ENCODE measurements at regions of chr17 and their contacts with region 1.

Region 1: GRCh38 chr17:64320613-64321553 is 57.8 kb upstream of the TEX2 start:
- DNase-seq: peak; percentile 68
- ATAC-seq: peak; percentile 47
- H3K4me3 Mint-ChIP-seq: no peak overlapping the region
- H3K27ac Mint-ChIP-seq: peak overlapping the region; percentile 43
- H3K4me1 Mint-ChIP-seq: peaks cover 40% of the 10 kb centered on the region
- H3K27me3 Mint-ChIP-seq: no peaks in the 10 kb centered on the region
- CTCF ChIP-seq: peak; percentile 94

Region 2: GRCh38 chr17:64281962-64282727 is 38.7 kb before region 1 on chr17:
- CTCF ChIA-PET with region 1: no interaction called
- POLR2A ChIA-PET with region 1: no interaction called
- intact Hi-C with region 1: no loop called
- DNase-seq: peak; percentile 74
- ATAC-seq: peak; percentile 77
- H3K4me3 Mint-ChIP-seq: no peak overlapping the region
- H3K27ac Mint-ChIP-seq: no peak overlapping the region
- H3K4me1 Mint-ChIP-seq: peaks cover 2% of the 10 kb centered on the region
- H3K27me3 Mint-ChIP-seq: no peaks in the 10 kb centered on the region
- CTCF ChIP-seq: peak; percentile 84

Region 3: DNA sequence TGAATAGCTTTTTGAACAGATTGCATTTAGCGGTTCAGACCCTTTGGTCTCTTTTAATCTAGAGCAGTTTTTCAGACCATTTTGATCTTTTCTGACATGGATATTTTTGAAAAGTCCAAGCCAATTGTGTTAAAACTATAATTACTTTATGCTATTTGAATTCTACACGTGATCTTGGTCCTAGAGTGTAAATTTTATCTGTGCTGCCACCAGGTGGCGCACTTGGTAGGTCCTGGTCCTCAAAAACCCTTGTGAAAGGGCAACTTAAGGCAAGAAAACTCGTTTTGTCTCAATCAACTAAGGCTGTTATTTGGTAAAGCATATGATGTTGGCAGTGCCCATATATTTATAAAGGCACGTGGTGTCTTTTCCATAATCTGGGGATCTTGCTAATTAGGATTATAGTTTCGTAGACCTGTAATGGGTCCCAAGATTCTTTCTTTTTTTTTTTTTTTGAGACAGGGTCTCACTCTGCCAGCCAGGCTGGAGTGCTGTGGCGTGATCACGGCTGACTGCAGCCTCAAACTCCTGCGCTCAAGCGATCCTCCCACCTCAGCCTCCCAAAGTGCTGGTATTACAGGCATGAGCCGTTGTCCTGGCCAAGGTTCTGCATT is 13.9 kb before region 1 on chr17:
- CTCF ChIA-PET with region 1: interaction called, 23 read pairs
- POLR2A ChIA-PET with region 1: interaction called, 3 read pairs
- intact Hi-C with region 1: no loop called
- DNase-seq: peak; percentile 85
- ATAC-seq: peak; percentile 69
- H3K4me3 Mint-ChIP-seq: no peak overlapping the region
- H3K27ac Mint-ChIP-seq: no peak overlapping the region
- H3K4me1 Mint-ChIP-seq: peaks cover 4% of the 10 kb centered on the region
- H3K27me3 Mint-ChIP-seq: no peaks in the 10 kb centered on the region
- CTCF ChIP-seq: peak; percentile 94

Region 4: DNA sequence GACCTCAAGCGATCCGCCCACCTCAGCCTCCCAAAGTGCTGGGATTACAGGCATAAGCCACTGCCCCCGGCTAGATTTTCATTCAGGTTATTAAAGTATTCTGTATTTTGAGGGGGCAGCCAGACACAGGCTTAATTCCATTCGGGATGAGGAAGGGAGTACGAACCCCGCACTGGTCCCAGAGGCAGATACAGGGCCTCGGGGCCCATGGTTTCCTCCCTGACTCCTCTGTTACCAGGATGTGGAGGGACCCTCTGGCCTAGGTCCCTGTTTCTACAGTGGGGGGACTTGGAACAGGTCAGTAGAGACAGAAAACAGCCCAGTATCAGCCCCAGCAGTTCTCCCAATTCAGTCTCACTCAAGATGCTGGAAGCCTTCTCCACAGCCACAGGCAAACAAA is 27.8 kb after region 1 on chr17:
- CTCF ChIA-PET with region 1: interaction called, 16 read pairs
- POLR2A ChIA-PET with region 1: interaction called, 3 read pairs
- intact Hi-C with region 1: no loop called
- DNase-seq: no peak
- ATAC-seq: no peak
- H3K4me3 Mint-ChIP-seq: no peak overlapping the region
- H3K27ac Mint-ChIP-seq: peak overlapping the region; percentile 88
- H3K4me1 Mint-ChIP-seq: peaks cover 28% of the 10 kb centered on the region
- H3K27me3 Mint-ChIP-seq: no peaks in the 10 kb centered on the region
- CTCF ChIP-seq: no peak

Region 5: GRCh38 chr17:64357191-64357981 is 36.5 kb after region 1 on chr17:
- CTCF ChIA-PET with region 1: interaction called, 13 read pairs
- POLR2A ChIA-PET with region 1: interaction called, 4 read pairs
- intact Hi-C with region 1: no loop called
- DNase-seq: no peak
- ATAC-seq: no peak
- H3K4me3 Mint-ChIP-seq: no peak overlapping the region
- H3K27ac Mint-ChIP-seq: peak overlapping the region; percentile 35
- H3K4me1 Mint-ChIP-seq: peaks cover 35% of the 10 kb centered on the region
- H3K27me3 Mint-ChIP-seq: no peaks in the 10 kb centered on the region
- CTCF ChIP-seq: no peak

Region 6: DNA sequence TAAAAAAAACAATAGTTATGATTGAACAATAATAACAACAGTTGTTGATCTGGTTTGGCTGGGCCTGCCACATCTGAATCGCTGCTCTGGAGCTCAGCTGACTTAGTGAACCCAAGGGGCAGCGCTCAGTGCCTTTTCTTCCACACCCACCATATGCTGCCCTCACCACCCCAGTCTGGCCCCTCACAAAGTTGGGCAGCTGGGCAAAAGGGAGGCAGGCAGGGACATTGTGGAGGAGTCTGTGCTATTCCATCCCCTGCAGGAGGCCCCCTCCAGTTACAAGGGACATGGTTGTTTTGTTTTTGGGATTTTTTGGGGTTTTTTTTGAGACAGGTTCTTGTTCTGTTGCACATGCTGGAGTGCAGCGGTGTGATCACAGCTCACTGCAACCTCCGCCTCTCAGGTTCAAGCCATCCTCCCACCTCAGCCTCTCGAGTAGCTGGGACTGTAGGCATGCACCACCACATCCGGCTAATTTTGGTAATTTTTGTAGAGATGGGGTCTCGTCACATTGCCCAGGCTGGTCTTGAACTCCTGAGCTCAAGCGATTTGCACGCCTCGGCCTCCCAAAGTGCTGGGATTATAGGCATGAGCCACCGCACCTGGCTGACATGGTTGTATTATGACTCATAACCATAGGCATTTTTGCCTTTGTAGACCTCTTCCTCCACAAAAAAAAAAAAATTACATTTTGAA is 78.3 kb after region 1 on chr17:
- CTCF ChIA-PET with region 1: interaction called, 17 read pairs
- POLR2A ChIA-PET with region 1: interaction called, 3 read pairs
- intact Hi-C with region 1: loop called (anchors 5 kb)
- DNase-seq: peak; percentile 55
- ATAC-seq: peak; percentile 25
- H3K4me3 Mint-ChIP-seq: peak overlapping the region; percentile 13
- H3K27ac Mint-ChIP-seq: peak overlapping the region; percentile 74
- H3K4me1 Mint-ChIP-seq: peaks cover 54% of the 10 kb centered on the region
- H3K27me3 Mint-ChIP-seq: no peaks in the 10 kb centered on the region
- CTCF ChIP-seq: no peak

Region 7: GRCh38 chr17:64411999-64412771 is 91.3 kb after region 1 on chr17:
- CTCF ChIA-PET with region 1: interaction called, 251 read pairs
- POLR2A ChIA-PET with region 1: interaction called, 3 read pairs
- intact Hi-C with region 1: no loop called
- DNase-seq: no peak
- ATAC-seq: peak; percentile 13
- H3K4me3 Mint-ChIP-seq: peak overlapping the region; percentile 39
- H3K27ac Mint-ChIP-seq: no peak overlapping the region
- H3K4me1 Mint-ChIP-seq: peaks cover 13% of the 10 kb centered on the region
- H3K27me3 Mint-ChIP-seq: no peaks in the 10 kb centered on the region
- CTCF ChIP-seq: no peak

Region 8: GRCh38 chr17:64470625-64471024 is 149.7 kb after region 1 on chr17:
- CTCF ChIA-PET with region 1: no interaction called
- POLR2A ChIA-PET with region 1: no interaction called
- intact Hi-C with region 1: no loop called
- DNase-seq: no peak
- ATAC-seq: no peak
- H3K4me3 Mint-ChIP-seq: no peak overlapping the region
- H3K27ac Mint-ChIP-seq: no peak overlapping the region
- H3K4me1 Mint-ChIP-seq: no peaks in the 10 kb centered on the region
- H3K27me3 Mint-ChIP-seq: no peaks in the 10 kb centered on the region
- CTCF ChIP-seq: no peak

Measured in activated CD8-positive, alpha-beta T cell treated with anti-CD3 and anti-CD28 coated beads for 36 hours (primary cell).